ENCODE measurements at regions of chr18 and their contacts with region 1.

Region 1: DNA sequence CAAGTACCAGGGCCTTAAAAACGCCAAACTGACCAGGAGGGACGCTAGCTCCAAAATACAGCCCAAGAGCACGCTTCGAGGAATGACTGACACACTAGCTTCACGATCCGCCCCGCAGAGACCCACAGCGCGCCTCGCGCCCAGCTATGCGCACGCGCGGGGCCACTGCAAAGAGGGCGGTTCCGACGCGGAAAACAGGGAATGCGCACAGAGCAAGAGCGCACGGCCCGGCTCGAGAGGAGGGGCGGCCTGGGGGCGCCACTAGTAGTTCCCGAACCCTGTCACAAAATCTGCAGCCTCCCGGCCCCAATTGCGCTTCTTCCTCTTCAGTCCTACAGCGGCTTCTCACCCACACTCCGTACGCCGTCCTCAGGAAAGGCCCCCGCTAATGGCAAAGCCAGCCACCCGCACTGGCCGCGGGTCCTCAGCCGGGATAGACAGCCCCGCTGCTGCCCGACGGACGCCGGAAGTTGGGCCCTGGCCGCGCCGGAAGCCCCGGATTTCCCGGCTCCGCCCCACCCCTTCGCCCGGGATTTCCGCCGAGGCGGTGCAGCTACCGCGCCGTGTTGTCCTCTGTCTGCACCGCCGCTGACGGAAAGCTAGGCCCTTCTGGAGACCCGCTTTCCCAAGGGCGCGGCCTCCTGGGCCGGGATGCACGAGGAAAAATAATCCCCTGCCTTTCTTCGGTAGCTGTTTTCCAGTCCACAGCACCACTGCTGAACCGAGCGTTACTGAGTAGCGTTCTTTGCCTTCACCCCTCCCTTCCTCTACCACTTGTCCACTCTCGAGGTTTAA is at the start of gene HDHD2:
- DNase-seq: peak; percentile 69 to 96 (median 90)

Region 2: DNA sequence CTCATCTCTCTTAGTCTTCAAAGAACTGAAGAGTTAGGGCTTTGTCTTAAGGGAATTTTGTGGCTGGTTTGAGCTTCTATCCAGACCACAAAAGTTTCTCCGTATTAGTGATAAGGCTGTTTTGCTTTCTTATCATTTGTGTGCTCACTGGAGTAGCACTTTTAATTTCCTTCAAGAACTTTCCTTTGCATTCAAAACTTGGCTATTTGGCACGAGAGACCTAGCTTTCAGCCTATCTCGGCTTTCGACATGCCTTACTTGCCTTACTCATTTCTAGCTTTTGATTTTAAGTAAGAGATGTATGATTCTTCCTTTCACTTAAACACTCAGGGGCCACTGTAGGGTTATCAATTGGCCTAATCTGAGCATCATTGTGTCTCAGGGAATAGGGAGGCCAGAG is 29.8 kb before region 1 on chr18:
- intact Hi-C with region 1: no loop called
- DNase-seq: no peak

Region 3: GRCh38 chr18:47175908-47176575 is 25.8 kb after region 1 on chr18 and contains the start of gene IER3IP1:
- intact Hi-C with region 1: loop called (anchors 2 kb)
- DNase-seq: peak; percentile 79 to 97 (median 92)

Measured in head of caudate nucleus (tissue), 42 donors.